Heart left ventricle (tissue), 16 donors: ENCODE measurements at regions of chr13 and their contacts with region 1.

Region 1: DNA sequence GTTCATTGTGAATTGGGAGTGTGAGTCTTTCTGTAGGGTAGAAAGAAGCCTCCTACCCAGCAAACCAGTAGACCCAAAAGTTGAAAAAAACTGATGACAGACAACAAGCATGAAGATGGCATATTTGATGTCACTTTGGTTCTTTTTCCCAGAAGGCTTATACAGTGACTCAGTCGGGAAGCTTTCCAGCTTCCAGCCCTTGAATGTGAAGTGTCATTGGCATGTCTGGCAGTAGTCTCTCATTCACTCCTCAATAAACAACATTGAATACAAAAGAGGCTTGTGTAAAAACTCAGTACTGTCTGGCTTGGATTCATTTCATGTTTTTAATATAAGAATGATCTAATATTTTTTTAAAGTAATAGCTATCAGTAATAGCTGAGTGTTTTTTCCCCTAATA is 68.7 kb downstream of the IPO5 start:
- DNase-seq: peak in 2 of 5 donors; percentile 35 to 52
- ATAC-seq: peak; percentile 78 to 88 (median 82)
- H3K4me3 ChIP-seq: no peak overlapping the region
- H3K27ac ChIP-seq: peak overlapping the region in 3 of 12 donors; percentile 4 to 47 (median 42)
- H3K4me1 ChIP-seq: peaks cover 0 to 15% (median 5%) of the 10 kb centered on the region in 12 donors
- H3K27me3 ChIP-seq: no peaks in the 10 kb centered on the region
- CTCF ChIP-seq: no peak
- POLR2A ChIP-seq: no peak

Region 2: GRCh38 chr13:97986835-97987234 is 35.4 kb before region 1 on chr13:
- intact Hi-C with region 1: loop called in 2 of 10 experiments (anchors 5 kb)
- DNase-seq: no peak
- ATAC-seq: no peak
- H3K4me3 ChIP-seq: no peak overlapping the region
- H3K27ac ChIP-seq: no peak overlapping the region
- H3K4me1 ChIP-seq: peaks cover 0 to 4% (median 0%) of the 10 kb centered on the region in 12 donors
- H3K27me3 ChIP-seq: no peaks in the 10 kb centered on the region
- CTCF ChIP-seq: no peak
- POLR2A ChIP-seq: no peak

Region 3: DNA sequence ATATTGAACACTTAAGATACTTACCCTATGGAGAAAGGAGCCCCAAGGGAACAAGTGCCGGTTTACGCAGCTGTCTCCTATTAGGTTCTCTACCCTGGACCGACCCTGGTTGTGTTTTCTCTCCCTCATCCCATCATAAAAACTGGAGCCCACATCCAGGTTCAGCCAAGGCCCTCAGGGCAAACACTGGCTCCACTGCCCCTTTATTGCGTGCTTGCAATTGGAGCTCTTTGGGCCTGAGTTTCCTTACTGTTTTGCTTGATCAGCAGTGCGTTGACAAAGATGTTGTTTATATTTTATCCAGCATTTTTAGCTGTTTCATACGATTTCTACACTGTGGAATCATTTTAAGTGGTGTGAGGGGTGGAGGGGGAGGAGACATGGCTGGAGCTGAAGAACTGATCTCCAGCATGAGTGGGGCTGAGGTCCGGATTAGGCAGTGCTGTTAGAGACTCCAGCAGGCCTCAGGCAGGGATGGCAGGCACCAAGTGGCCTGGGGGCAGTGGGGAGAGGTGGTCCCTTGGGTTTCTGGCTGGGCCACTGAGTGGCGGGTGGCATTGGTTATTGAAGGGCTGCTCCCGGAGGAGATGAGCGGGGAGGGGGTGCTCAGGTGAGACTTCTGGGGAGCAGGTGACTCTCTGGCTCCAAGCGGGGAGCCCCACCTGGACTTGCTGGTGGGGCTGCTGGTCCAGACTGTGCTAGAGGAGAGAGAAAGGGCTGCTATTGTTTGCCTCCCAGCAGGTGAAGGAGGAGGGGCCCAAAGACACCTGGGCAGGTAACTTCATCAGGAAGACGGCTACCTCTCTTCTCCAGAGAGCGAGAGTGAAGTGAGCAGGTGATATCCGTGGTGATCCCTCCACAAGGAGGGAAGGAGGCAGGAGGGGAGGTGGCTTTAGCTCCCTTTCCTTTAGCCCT is 217.2 kb after region 1 on chr13:
- intact Hi-C with region 1: no loop called
- DNase-seq: no peak
- ATAC-seq: no peak
- H3K4me3 ChIP-seq: no peak overlapping the region
- H3K27ac ChIP-seq: no peak overlapping the region
- H3K4me1 ChIP-seq: no peaks in the 10 kb centered on the region
- H3K27me3 ChIP-seq: no peaks in the 10 kb centered on the region
- CTCF ChIP-seq: no peak
- POLR2A ChIP-seq: no peak